Activated naive CD8-positive, alpha-beta T cell treated with anti-CD3 and anti-CD28 coated beads, Interleukin-2, amount 10 ng/mL, durations not matched to agents 7 days and 5 days (primary cell): ENCODE measurements at regions of chrX and their contacts with region 1.

Region 1: GRCh38 chrX:47233337-47234113 is 716 bp downstream of the USP11 start:
- DNase-seq: peak; percentile 87
- ATAC-seq: peak; percentile 91
- H3K4me3 Mint-ChIP-seq: peak overlapping the region; percentile 96
- H3K27ac Mint-ChIP-seq: peak overlapping the region; percentile 99
- H3K4me1 Mint-ChIP-seq: peaks cover 13% of the 10 kb centered on the region
- H3K27me3 Mint-ChIP-seq: no peaks in the 10 kb centered on the region

Region 2: DNA sequence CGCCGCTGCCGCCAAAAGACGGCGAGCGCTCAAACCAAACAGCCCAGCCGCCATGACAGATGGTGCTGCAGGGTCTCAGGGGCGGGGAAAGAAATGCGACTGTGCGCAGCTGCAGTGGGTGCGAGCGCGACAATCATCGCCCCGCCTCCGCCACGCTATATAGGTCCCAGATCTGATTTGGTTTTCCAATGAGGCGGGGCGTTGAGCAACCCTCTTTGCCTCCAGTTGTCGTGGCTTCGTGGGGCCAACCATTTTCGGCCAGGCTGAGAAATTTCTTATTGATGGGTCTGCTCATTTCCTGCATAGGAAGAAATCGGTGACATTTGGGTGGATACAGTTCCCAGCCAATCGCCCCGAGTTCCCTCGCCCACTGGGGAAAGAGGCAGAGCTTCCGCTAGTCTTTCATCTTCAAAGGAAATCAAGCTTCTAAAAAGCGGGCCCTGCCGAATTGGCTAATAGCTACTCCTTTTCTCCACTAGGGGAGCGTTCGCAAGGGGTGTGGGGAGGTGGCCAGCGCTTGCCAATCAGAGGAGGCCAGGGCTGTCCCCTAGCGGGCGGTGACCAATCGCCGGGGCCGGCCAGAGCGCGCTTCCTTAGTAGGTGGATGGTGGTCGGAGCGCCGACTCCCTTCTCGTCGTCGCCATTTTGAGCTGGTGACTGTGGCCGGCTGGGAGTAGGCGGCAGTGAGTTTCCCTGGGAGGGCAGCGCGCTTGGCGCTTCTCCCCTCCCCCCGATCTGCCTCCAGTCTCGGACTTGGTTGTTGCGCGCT is 88.7 kb before region 1 on chrX and contains the starts of genes NDUFB11 and RBM10:
- POLR2A ChIA-PET with region 1: interaction called, 10 read pairs
- DNase-seq: peak; percentile 85
- ATAC-seq: peak; percentile 95
- H3K4me3 Mint-ChIP-seq: peak within 1 kb of the TSS; percentile 95
- H3K27ac Mint-ChIP-seq: peak within 1 kb of the TSS; percentile 99
- H3K4me1 Mint-ChIP-seq: peaks cover 16% of the 10 kb centered on the region
- H3K27me3 Mint-ChIP-seq: no peaks in the 10 kb centered on the region
- total RNA-seq, gene NDUFB11: 71.7 to 78.7 TPM
- total RNA-seq, gene RBM10: 59.9 to 61.2 TPM

Region 3: GRCh38 chrX:47190445-47191269 is 42.9 kb before region 1 on chrX:
- POLR2A ChIA-PET with region 1: interaction called, 11 read pairs
- DNase-seq: peak; percentile 75
- ATAC-seq: peak; percentile 78
- H3K4me3 Mint-ChIP-seq: peak overlapping the region; percentile 90
- H3K27ac Mint-ChIP-seq: peak overlapping the region; percentile 95
- H3K4me1 Mint-ChIP-seq: peaks cover 20% of the 10 kb centered on the region
- H3K27me3 Mint-ChIP-seq: no peaks in the 10 kb centered on the region

Region 4: GRCh38 chrX:47217642-47218279 is 15.8 kb before region 1 on chrX:
- POLR2A ChIA-PET with region 1: interaction called, 49 read pairs
- DNase-seq: peak; percentile 88
- ATAC-seq: peak; percentile 84
- H3K4me3 Mint-ChIP-seq: peak overlapping the region; percentile 90
- H3K27ac Mint-ChIP-seq: peak overlapping the region; percentile 98
- H3K4me1 Mint-ChIP-seq: peaks cover 29% of the 10 kb centered on the region
- H3K27me3 Mint-ChIP-seq: no peaks in the 10 kb centered on the region

Region 5: DNA sequence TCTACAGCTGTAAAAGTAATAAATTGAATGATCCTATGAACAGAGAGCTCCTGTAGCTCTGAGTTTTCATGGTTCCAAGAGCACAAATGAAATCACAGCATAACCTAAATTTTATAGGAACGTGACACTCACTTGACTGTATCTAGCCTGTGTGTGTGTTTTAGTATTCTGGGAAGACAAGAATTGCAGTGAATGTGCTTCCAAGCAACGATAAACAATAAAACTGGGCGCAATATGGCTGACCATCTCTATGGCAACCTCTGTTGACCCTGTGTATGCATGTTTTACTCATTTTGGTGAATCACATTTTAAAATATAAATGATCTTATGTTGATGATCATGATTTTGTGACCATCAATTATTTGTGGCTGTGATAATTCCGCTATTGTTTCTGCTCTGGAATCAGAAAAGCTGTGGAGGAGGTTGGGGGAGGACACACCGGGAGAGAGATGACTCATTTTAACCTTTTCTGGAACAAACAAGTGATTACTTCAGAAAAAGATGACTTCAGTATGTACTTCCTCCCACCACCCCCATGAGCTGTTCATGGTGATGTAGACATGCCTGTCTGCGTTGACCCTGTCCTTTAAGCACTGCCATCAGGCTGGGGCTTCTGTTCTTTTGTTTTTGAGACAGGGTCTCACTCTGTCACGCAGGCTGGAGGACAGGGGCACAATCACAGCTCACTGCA is 31.1 kb after region 1 on chrX:
- POLR2A ChIA-PET with region 1: interaction called, 10 read pairs
- DNase-seq: no peak
- ATAC-seq: no peak
- H3K4me3 Mint-ChIP-seq: no peak overlapping the region
- H3K27ac Mint-ChIP-seq: no peak overlapping the region
- H3K4me1 Mint-ChIP-seq: peaks cover 2% of the 10 kb centered on the region
- H3K27me3 Mint-ChIP-seq: no peaks in the 10 kb centered on the region

Region 6: DNA sequence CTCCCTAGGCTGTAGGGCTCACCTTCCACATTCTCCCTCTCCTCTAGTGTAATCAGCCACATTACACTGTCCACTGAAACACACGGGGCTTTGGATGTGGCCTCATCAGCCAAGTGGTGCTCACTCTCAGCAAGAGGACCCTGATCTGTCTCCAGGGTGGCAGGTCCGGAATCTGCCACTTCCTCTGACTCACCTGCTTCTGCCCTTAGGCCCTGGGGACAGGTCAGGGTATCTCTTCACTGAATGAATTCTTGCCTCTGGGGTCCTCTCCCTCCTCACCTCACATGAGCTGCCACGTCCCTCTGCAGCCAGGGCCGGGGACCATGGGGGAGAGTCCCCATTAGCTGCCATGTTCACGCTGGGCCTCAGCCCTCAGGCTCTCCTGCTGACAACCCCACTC is 233.6 kb after region 1 on chrX:
- POLR2A ChIA-PET with region 1: no interaction called
- DNase-seq: no peak
- ATAC-seq: no peak
- H3K4me3 Mint-ChIP-seq: no peak overlapping the region
- H3K27ac Mint-ChIP-seq: no peak overlapping the region
- H3K4me1 Mint-ChIP-seq: peaks cover 3% of the 10 kb centered on the region
- H3K27me3 Mint-ChIP-seq: no peaks in the 10 kb centered on the region